ENCODE measurements at regions of chr17 and their contacts with region 1.

Region 1: GRCh38 chr17:3723556-3724369 is at the start of gene HASPIN:
- DNase-seq: peak; percentile 94
- H3K4me3 Mint-ChIP-seq: peak within 1 kb of the TSS; percentile 88
- H3K27ac Mint-ChIP-seq: peak within 1 kb of the TSS; percentile 86
- H3K4me1 Mint-ChIP-seq: peaks cover 65% of the 10 kb centered on the region
- H3K27me3 Mint-ChIP-seq: no peaks in the 10 kb centered on the region

Region 2: GRCh38 chr17:3514873-3515272 is 208.9 kb before region 1 on chr17:
- CTCF ChIA-PET with region 1: no interaction called
- DNase-seq: no peak
- H3K4me3 Mint-ChIP-seq: no peak overlapping the region
- H3K27ac Mint-ChIP-seq: no peak overlapping the region
- H3K4me1 Mint-ChIP-seq: no peaks in the 10 kb centered on the region
- H3K27me3 Mint-ChIP-seq: no peaks in the 10 kb centered on the region

Region 3: GRCh38 chr17:3683054-3683511 is 40.7 kb before region 1 on chr17:
- CTCF ChIA-PET with region 1: interaction called, 11 read pairs
- DNase-seq: peak; percentile 71
- H3K4me3 Mint-ChIP-seq: no peak overlapping the region
- H3K27ac Mint-ChIP-seq: no peak overlapping the region
- H3K4me1 Mint-ChIP-seq: peaks cover 27% of the 10 kb centered on the region
- H3K27me3 Mint-ChIP-seq: no peaks in the 10 kb centered on the region

Region 4: DNA sequence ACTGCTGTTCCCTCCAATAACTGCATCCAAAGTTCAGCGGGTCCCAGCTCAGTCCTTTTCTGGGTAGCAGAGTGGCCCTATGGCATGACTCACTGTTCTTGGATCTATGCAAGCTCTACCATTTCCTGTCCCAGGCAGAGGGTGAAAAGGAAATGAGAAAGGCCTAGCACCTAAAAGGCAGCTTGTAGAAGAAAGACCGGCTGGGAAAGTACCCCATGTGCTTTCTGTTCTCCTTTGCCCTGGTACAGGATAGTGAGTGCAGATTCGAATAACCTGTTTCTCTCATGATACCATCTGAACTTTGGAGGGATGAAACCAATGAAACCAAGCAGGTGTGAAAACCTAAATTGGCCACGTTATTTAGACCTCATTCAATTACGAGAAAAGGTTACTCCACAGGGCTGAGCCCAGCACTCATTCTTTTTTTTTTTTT is 12.8 kb before region 1 on chr17:
- CTCF ChIA-PET with region 1: interaction called, 11 read pairs
- DNase-seq: peak; percentile 84
- H3K4me3 Mint-ChIP-seq: peak overlapping the region; percentile 10
- H3K27ac Mint-ChIP-seq: peak overlapping the region; percentile 93
- H3K4me1 Mint-ChIP-seq: peaks cover 53% of the 10 kb centered on the region
- H3K27me3 Mint-ChIP-seq: no peaks in the 10 kb centered on the region

Measured in activated naive CD4-positive, alpha-beta T cell treated with anti-CD3 and anti-CD28 coated beads, Interleukin-2, amount 10 ng/mL, durations not matched to agents 7 days and 5 days (primary cell).